ENCODE measurements at regions of chr9 and their contacts with region 1.

Region 1: GRCh38 chr9:2181792-2182191 is 166.6 kb downstream of the SMARCA2 start:
- DNase-seq: peak in 2 of 3 donors; percentile 16 to 32
- H3K4me3 ChIP-seq: no peak overlapping the region
- H3K4me3 Mint-ChIP-seq: no peak overlapping the region
- H3K27ac ChIP-seq: no peak overlapping the region
- H3K27ac Mint-ChIP-seq: peak overlapping the region in 1 of 7 donors; percentile 18
- H3K4me1 ChIP-seq: no peaks in the 10 kb centered on the region
- H3K4me1 Mint-ChIP-seq: no peaks in the 10 kb centered on the region
- H3K27me3 ChIP-seq: no peaks in the 10 kb centered on the region
- H3K27me3 Mint-ChIP-seq: no peaks in the 10 kb centered on the region
- CTCF ChIP-seq: peak; percentile 79

Region 2: GRCh38 chr9:2140600-2141223 is 41.1 kb before region 1 on chr9:
- intact Hi-C with region 1: loop called (anchors 5 to 10 kb)
- DNase-seq: no peak
- H3K4me3 ChIP-seq: no peak overlapping the region
- H3K4me3 Mint-ChIP-seq: no peak overlapping the region
- H3K27ac ChIP-seq: no peak overlapping the region
- H3K27ac Mint-ChIP-seq: peak overlapping the region in 1 of 7 donors; percentile 20
- H3K4me1 ChIP-seq: peaks cover 9 to 16% of the 10 kb centered on the region in 2 donors
- H3K4me1 Mint-ChIP-seq: peaks cover 37% of the 10 kb centered on the region
- H3K27me3 ChIP-seq: no peaks in the 10 kb centered on the region
- H3K27me3 Mint-ChIP-seq: no peaks in the 10 kb centered on the region
- CTCF ChIP-seq: no peak

Measured in CD14-positive monocyte (primary cell).